OCI-LY7 (cell line): ENCODE measurements at regions of chr2 and their contacts with region 1.

Region 1: GRCh38 chr2:218395797-218396687 is 3.6 kb upstream of the CTDSP1 start:
- DNase-seq: peak; percentile 98
- H3K4me3 ChIP-seq: peak overlapping the region; percentile 88
- H3K27ac ChIP-seq: peak overlapping the region; percentile 87
- H3K4me1 ChIP-seq: peaks cover 46% of the 10 kb centered on the region
- CTCF ChIP-seq: peak; percentile 89

Region 2: DNA sequence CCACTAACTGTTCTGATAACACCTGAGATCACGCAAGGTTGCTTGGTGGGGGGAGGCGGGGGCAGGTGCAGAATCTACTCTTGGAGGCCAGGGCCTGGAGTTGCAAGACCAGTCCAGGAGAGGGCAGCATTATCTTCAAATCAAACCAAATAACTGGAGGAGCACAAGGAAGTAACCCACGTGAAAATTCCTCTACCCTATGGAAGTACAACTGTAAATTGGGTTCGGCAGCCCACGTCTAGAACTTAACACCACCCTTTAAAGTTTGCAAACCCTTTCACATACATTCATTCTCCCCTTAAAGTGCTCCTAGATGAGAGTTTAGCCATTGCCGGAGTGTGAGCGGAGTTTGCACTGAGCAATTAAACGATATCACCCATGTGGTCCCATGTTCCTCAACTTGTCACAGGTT is 209.7 kb before region 1 on chr2:
- CTCF ChIA-PET with region 1: no interaction called
- POLR2A ChIA-PET with region 1: no interaction called
- intact Hi-C with region 1: loop called (anchors 2 kb)
- DNase-seq: peak; percentile 79
- H3K4me3 ChIP-seq: no peak overlapping the region
- H3K27ac ChIP-seq: no peak overlapping the region
- H3K4me1 ChIP-seq: peaks cover 6% of the 10 kb centered on the region
- CTCF ChIP-seq: peak; percentile 93

Region 3: GRCh38 chr2:218269899-218270720 is 125.9 kb before region 1 on chr2 and contains the starts of genes AAMP and PNKD:
- CTCF ChIA-PET with region 1: interaction called, 3 read pairs
- POLR2A ChIA-PET with region 1: interaction called, 3 read pairs
- intact Hi-C with region 1: loop called (anchors 1 kb)
- DNase-seq: peak; percentile 100
- H3K4me3 ChIP-seq: peak within 1 kb of the TSS; percentile 97
- H3K27ac ChIP-seq: peak within 1 kb of the TSS; percentile 44
- H3K4me1 ChIP-seq: peaks cover 23% of the 10 kb centered on the region
- CTCF ChIP-seq: 0 out of 2 replicates have a peak, but pooled peaks have one; percentile 24
- total RNA-seq, gene AAMP: 97.0 and 136 TPM in 2 replicates
- total RNA-seq, gene PNKD: 65.9 and 66.3 TPM in 2 replicates

Region 4: DNA sequence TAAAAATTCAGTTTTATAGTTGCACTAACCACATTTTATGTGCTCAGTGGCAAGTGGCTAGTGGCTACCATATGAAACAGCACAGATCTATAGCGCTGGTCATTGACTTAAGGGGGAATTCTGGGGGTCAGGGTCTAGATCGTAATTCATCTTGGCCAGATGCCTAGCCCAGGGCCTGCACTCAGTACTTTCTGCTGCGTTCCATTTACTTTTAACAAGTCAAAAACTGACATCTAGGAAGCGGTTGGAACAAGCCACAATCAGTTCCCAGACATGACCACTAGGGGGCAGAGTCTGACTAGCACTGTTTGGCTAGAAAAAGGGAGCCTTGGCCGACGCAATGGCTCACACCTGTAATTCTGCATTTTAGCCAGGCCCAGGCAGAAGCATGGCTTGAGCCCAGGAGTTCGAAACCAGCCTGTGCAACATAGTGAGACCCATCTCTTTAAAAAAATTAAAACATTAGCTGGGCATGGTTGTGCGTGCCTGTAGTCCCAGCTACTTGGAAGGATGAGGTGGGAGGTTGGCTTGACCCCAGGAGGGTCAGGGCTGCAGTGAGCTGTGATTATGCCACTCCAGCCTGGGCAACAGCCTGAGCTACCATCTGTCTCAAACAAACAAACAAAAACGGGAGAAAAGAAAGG is 94.7 kb before region 1 on chr2:
- CTCF ChIA-PET with region 1: interaction called, 6 read pairs
- POLR2A ChIA-PET with region 1: interaction called, 7 read pairs
- intact Hi-C with region 1: loop called (anchors 1 kb)
- DNase-seq: peak; percentile 95
- H3K4me3 ChIP-seq: no peak overlapping the region
- H3K27ac ChIP-seq: no peak overlapping the region
- H3K4me1 ChIP-seq: peaks cover 36% of the 10 kb centered on the region
- CTCF ChIP-seq: peak; percentile 96

Region 5: DNA sequence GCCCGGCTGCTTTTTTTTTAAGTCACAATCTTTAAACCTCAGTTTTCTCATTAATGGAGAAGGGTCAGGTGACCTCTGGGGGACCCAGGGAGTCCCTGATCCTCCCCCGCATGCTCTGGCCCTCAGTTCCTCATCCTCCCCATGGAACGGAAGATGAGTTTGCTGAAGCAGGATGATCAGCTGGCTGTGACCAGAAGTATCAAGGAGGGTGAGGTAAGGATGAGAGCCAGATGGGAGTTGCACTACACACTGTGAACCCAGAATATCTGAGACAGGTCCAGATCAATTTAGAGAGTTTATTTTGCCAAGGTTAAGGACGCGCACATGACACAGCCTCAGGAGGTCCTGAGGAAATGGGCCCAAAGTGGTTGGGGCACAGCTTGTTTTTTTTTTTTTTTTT is 35.6 kb before region 1 on chr2:
- CTCF ChIA-PET with region 1: interaction called, 4 read pairs
- POLR2A ChIA-PET with region 1: interaction called, 3 read pairs
- intact Hi-C with region 1: loop called (anchors 5 kb)
- DNase-seq: no peak
- H3K4me3 ChIP-seq: no peak overlapping the region
- H3K27ac ChIP-seq: no peak overlapping the region
- H3K4me1 ChIP-seq: peaks cover 23% of the 10 kb centered on the region
- CTCF ChIP-seq: no peak

Region 6: GRCh38 chr2:218485986-218486667 is 90.1 kb after region 1 on chr2:
- CTCF ChIA-PET with region 1: no interaction called
- POLR2A ChIA-PET with region 1: no interaction called
- intact Hi-C with region 1: no loop called
- DNase-seq: no peak
- H3K4me3 ChIP-seq: no peak overlapping the region
- H3K27ac ChIP-seq: no peak overlapping the region
- H3K4me1 ChIP-seq: peaks cover 12% of the 10 kb centered on the region
- CTCF ChIP-seq: no peak

Region 7: DNA sequence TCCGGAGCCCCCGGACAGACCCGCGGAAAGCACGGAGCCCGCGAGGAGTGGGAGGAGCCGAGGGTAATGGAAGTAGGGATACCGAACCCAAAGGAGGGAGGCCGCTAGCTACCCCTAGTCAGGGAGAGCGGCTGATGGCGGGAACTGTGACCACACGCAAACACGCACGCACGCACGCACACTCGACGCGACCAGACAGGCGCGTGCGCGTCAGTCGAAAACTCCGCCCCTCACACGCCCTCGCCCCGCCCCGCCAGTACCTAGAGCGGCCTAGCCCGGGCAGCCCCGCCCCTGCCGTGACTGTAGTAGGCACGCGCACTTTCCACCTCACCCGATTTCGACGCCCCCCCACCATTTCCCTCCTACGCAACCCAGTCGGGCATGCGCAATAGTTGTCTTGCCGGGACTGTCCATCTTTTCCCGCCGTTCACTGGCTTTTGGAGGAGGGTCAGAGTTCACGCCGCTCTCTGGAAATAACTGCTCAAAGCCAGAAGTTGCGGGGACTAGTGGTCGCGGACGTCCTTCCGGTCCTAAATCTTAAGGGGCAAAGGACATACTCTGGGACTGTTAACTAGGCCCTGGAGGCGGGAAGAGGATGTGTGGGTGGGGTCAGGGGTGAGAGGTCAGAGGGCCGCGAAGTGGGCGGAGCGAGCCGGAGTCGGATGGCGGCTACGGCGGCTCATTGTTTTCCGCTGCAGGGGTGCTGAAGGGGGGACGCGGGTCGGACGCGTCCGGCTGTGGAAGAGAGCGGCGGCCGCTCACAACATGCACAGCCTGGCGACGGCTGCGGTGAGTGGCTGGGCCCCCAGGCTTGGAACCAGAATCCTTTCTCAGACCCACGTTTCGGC is 172.4 kb after region 1 on chr2 and contains the starts of genes CNOT9 and USP37:
- CTCF ChIA-PET with region 1: no interaction called
- POLR2A ChIA-PET with region 1: no interaction called
- intact Hi-C with region 1: loop called (anchors 2 kb)
- DNase-seq: peak; percentile 99
- H3K4me3 ChIP-seq: peak within 1 kb of the TSS; percentile 93
- H3K27ac ChIP-seq: peak within 1 kb of the TSS; percentile 89
- H3K4me1 ChIP-seq: peaks cover 31% of the 10 kb centered on the region
- CTCF ChIP-seq: no peak
- total RNA-seq, gene CNOT9: 67.8 and 71.6 TPM in 2 replicates
- total RNA-seq, gene USP37: 23.3 and 31.4 TPM in 2 replicates

Region 8: DNA sequence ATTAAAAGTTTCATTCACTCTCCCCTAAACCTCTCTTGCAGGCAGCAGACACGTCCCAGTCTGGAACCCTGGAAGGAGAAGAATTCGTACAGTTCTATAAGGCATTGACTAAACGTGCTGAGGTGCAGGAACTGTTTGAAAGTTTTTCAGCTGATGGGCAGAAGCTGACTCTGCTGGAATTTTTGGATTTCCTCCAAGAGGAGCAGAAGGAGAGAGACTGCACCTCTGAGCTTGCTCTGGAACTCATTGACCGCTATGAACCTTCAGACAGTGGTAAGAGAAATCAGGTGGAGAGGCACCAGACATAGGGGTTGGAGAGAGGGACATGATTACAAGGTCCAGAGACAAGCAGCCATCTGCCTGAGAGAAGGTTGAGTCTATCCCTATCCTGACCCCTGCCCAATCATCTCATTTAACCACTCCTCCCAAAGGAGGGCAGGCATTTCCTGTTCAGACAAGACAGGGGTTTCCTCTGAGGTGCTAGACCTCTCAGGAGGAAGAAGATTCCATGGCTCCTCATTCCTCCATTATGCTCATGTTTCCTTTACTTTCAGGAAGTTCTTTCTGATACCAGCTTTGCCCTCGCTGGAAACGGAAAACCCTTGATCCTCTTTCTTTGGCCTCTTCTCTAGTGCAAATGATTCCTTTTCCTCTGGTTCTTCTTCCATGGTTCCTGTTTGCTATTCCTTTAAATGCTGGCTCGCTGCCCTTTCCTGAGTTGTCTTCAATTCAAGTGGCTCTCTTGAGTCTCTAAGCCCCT is 226.7 kb after region 1 on chr2:
- CTCF ChIA-PET with region 1: no interaction called
- POLR2A ChIA-PET with region 1: no interaction called
- intact Hi-C with region 1: no loop called
- DNase-seq: no peak
- H3K4me3 ChIP-seq: no peak overlapping the region
- H3K27ac ChIP-seq: no peak overlapping the region
- H3K4me1 ChIP-seq: no peaks in the 10 kb centered on the region
- CTCF ChIP-seq: no peak